Mammary epithelial cell (primary cell): ENCODE measurements at regions of chrX and their contacts with region 1.

Region 1: GRCh38 chrX:39504850-39505259 is 592.9 kb downstream of the BCOR start:
- DNase-seq: no peak
- H3K4me3 ChIP-seq: no peak overlapping the region
- H3K27ac ChIP-seq: no peak overlapping the region
- H3K4me1 ChIP-seq: no peaks in the 10 kb centered on the region
- H3K27me3 ChIP-seq: peaks cover 2% of the 10 kb centered on the region
- CTCF ChIP-seq: no peak

Region 2: GRCh38 chrX:39073131-39073530 is 431.7 kb before region 1 on chrX:
- CTCF ChIA-PET with region 1: no interaction called
- dilution Hi-C with region 1: no loop called
- in situ Hi-C with region 1: no loop called
- intact Hi-C with region 1: no loop called
- DNase-seq: peak; percentile 64
- H3K4me3 ChIP-seq: no peak overlapping the region
- H3K27ac ChIP-seq: no peak overlapping the region
- H3K4me1 ChIP-seq: peaks cover 5% of the 10 kb centered on the region
- H3K27me3 ChIP-seq: no peaks in the 10 kb centered on the region
- CTCF ChIP-seq: no peak

Region 3: DNA sequence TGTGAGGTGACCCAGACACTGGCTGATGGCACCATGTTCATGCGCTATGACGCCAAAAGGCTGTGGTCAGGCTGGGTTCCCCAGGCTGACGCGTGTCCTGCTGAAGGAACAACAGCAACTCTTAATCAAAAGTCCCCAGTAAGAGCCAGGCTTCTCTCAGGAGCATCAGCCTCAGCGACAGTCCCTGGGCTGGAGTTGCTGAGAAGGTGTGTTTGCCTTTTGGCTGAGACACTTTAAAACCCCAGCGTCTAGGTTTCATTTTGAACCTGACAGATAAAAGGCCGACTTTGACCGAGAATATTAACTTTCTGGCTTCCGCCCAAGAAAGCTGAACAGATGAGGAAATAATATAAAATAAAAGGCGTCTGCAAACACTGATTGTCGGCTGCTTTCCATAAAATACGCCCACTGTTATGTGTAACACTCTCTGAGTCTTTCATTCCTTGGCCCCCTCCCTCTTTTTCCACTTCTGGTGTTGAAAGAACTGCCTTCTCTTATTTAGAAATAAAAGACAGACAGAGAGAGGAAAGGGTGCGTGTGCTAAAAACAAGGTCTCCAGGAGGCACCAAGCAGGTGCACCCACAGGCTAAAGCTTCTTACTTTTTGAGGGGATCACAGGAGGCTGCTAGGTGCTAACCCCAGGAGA is 330.0 kb before region 1 on chrX:
- CTCF ChIA-PET with region 1: no interaction called
- dilution Hi-C with region 1: no loop called
- in situ Hi-C with region 1: no loop called
- intact Hi-C with region 1: no loop called
- DNase-seq: no peak
- H3K4me3 ChIP-seq: no peak overlapping the region
- H3K27ac ChIP-seq: no peak overlapping the region
- H3K4me1 ChIP-seq: no peaks in the 10 kb centered on the region
- H3K27me3 ChIP-seq: peaks cover 14% of the 10 kb centered on the region
- CTCF ChIP-seq: no peak

Region 4: DNA sequence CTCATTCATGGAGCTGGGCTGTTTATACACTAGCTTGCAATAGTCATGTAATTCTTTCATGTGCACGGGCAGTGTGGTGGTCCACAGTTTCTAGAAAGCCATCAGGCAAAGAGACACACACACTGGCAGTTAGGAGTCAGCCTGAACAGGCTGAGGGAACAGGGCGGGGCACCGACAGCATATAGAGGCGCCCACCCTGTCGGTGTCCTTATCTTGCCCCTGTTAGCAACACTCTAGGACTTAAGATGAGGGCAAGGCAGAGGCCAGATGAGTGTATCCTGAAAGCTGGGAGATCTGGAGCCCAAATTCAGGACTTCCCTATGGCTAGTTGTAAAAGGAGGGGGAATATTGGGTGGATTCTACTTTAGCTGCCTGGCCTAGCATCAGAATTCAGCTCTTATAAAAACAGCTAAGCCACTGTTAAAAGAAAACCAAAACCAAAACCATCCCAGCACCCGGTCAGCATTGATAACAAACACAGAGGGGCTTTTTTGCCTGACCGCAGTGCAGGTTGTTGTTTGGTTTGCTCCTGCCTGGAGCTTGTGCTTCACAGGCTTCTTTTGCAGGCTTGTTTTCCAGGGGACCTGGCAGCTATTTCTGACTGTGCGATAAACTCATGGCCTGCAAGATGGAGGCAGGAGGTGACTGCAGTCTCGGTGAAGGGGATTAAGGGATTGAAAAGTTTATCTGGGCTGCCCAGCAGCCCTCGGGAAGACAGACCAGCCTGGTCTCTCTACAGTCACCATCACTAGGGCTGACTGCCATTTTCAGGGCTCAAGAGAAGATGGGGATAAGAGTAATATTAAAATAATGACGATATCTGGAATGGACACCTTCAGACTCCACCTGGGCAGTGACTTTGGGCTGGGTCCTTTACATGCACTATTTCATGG is 64.7 kb before region 1 on chrX:
- CTCF ChIA-PET with region 1: no interaction called
- dilution Hi-C with region 1: no loop called
- in situ Hi-C with region 1: no loop called
- intact Hi-C with region 1: no loop called
- DNase-seq: no peak
- H3K4me3 ChIP-seq: no peak overlapping the region
- H3K27ac ChIP-seq: no peak overlapping the region
- H3K4me1 ChIP-seq: no peaks in the 10 kb centered on the region
- H3K27me3 ChIP-seq: no peaks in the 10 kb centered on the region
- CTCF ChIP-seq: no peak

Region 5: DNA sequence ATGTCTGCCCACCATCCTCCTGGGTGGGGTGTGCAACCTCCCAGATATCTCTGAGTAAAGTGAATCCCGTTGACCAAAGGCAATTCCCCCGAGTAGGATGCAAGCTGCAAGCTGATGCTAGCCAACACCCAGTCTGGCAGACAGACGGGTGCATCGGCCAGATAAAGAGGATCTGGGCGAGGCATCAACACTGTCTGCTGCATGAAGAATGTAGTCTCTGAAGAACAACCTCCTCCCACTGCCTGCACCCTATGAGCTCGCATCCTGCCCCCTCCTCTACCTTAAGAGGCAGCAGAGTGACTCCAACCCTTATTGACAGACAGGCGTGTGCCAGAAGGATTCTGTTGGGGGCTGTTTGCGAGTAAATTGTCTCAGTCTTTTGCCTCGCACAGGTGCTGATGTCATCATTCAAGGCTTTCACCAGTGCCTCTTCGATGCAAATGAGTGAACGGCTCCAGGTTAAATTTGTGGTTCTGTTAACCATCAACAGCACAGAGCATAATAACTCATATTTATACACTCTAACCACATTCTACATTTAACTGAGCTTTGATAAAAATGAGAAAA is 46.0 kb after region 1 on chrX:
- CTCF ChIA-PET with region 1: no interaction called
- dilution Hi-C with region 1: no loop called
- in situ Hi-C with region 1: no loop called
- intact Hi-C with region 1: no loop called
- DNase-seq: no peak
- H3K4me3 ChIP-seq: no peak overlapping the region
- H3K27ac ChIP-seq: no peak overlapping the region
- H3K4me1 ChIP-seq: no peaks in the 10 kb centered on the region
- H3K27me3 ChIP-seq: no peaks in the 10 kb centered on the region
- CTCF ChIP-seq: no peak

Region 6: DNA sequence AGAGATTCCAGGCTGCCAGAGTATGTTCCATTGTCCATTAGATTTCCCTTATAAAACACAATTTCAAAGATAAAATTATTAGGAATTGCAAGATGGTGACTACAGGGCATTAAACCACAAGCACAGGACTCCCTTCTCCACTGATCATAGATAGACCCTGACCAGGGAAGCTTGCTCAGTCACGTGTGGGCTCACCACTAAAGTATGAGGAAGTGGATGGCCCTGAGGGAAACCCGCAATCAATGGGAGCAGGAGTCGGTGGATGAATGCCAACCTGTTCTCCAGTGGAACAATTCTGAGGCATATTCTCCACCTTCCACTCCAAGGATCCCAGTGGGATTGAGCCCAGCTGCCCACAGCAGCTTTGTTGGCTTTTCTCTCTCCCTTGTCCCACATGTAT is 77.2 kb after region 1 on chrX:
- CTCF ChIA-PET with region 1: no interaction called
- dilution Hi-C with region 1: loop called (anchors 5 kb)
- in situ Hi-C with region 1: no loop called
- intact Hi-C with region 1: no loop called
- DNase-seq: peak; percentile 27
- H3K4me3 ChIP-seq: no peak overlapping the region
- H3K27ac ChIP-seq: no peak overlapping the region
- H3K4me1 ChIP-seq: peaks cover 6% of the 10 kb centered on the region
- H3K27me3 ChIP-seq: no peaks in the 10 kb centered on the region
- CTCF ChIP-seq: no peak